HCT116 (cell line): ENCODE measurements at regions of chr12 and their contacts with region 1.

Region 1: GRCh38 chr12:26028953-26029735 is 70.7 kb downstream of the RASSF8 start:
- DNase-seq: peak; percentile 40
- ATAC-seq: peak; percentile 68
- H3K4me3 ChIP-seq: no peak overlapping the region
- H3K27ac ChIP-seq: no peak overlapping the region
- H3K4me1 ChIP-seq: no peaks in the 10 kb centered on the region
- H3K27me3 ChIP-seq: no peaks in the 10 kb centered on the region
- CTCF ChIP-seq: peak; percentile 65 to 82 (median 70)
- POLR2A ChIP-seq: no peak
- RAD21 ChIP-seq: peak; percentile 78

Region 2: DNA sequence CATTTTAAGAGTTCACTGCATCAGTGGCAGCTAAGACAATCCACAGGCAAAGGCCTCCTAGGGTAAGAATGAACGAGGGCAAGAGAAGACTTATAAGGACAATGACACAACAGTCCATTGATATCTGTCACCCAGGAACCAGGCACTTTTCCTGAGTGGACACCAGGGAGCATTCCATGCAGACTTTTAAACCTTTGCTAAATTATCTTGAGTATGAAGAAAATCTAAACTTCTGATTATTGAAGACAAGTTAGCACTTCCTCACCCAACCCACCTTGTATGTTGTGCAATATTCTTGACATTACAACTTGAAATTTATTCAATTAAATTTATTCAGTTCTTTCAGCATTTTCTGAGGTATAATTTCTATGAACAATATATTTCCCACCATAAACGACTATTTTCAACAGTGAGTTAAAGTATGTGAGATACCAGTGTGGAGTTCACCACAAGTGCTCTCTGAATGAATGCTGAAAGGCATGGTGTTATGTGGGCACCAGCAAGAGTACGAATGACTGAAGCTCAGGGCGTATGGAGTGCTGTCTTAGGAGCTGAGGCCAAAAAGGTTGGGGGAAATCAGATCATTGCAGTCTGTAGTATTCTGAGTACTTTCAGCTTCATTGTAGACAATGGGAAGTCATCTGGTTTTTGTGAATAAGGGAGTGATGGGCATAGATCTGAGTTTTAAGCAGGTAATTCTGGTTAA is 351.8 kb before region 1 on chr12:
- CTCF ChIA-PET with region 1: no interaction called
- POLR2A ChIA-PET with region 1: no interaction called
- RAD21 ChIA-PET with region 1: no interaction called
- intact Hi-C with region 1: loop called (anchors 2 kb)
- DNase-seq: no peak
- ATAC-seq: no peak
- H3K4me3 ChIP-seq: no peak overlapping the region
- H3K27ac ChIP-seq: no peak overlapping the region
- H3K4me1 ChIP-seq: no peaks in the 10 kb centered on the region
- H3K27me3 ChIP-seq: no peaks in the 10 kb centered on the region
- CTCF ChIP-seq: peak in 2 of 3 experiments; percentile 12 to 29; a peak in 2 of 6 replicates
- POLR2A ChIP-seq: no peak
- RAD21 ChIP-seq: peak; percentile 53; the same call in 1 of the 2 replicates